Naive thymus-derived CD4-positive, alpha-beta T cell (primary cell): ENCODE measurements at regions of chr1 and their contacts with region 1.

Region 1: DNA sequence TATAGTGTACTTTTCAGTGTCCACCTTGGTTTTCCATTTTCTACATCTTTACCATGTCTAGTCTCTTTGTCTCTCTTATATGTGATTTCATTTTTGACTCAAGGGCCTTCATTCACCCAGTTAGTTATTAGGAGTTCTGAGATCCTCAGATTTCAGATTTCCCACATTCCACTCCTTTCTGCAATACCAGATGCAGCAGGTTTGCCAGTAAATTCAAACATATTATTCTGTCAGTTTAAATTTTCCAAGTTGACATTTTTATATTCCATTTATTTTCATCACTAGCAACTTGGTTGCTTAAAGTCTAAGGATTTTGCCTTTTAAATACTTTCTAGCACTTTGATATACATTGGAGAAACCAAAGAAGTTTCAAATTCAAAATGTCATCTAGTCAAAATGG is 42.4 kb downstream of the ABL2 start:
- DNase-seq: no peak
- ATAC-seq: no peak
- H3K4me3 ChIP-seq: no peak overlapping the region
- H3K4me3 Mint-ChIP-seq: no peak overlapping the region
- H3K27ac ChIP-seq: no peak overlapping the region
- H3K27ac Mint-ChIP-seq: no peak overlapping the region
- H3K4me1 ChIP-seq: no peaks in the 10 kb centered on the region
- H3K4me1 Mint-ChIP-seq: peaks cover 5 to 29% (median 19%) of the 10 kb centered on the region in 7 donors
- H3K27me3 ChIP-seq: no peaks in the 10 kb centered on the region
- H3K27me3 Mint-ChIP-seq: no peaks in the 10 kb centered on the region

Region 2: DNA sequence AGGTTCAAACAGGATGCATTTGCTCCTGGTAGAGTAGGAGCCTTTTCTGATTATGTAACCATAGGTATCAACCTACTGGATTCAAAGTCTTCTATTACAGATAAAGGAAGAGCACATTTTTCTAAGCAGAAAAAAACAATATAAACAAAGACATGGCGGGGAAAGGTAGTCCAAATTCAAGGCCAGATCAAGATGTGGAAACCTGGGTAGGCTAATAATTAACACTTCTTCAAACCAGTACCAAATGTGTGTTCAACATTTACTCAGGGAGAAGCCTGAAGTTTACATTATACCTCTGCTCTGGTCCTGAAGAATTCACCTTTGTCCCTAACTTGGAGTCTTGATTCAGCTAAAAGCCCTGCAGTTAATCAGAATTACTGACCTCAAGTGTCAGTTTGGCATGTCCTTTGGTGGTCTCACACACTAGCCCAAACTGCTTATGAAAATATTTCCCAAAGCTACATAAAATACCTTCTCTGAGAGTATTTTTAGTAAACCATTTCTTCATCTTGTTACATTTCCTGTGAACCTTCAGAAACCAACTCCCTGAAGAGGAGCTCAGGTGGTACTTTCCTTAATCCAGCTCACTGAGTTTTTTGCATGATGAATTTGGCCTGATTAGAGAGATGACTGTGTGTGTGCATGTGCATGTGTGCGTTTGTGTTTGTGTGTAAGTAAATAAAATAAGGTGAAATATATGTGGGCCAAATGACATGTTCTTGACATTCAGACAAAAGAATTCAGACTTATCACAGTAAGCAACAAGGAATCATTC is 34.9 kb before region 1 on chr1:
- CTCF ChIA-PET with region 1: no interaction called
- POLR2A ChIA-PET with region 1: no interaction called
- intact Hi-C with region 1: loop called in 1 of 2 experiments (anchors 5 kb)
- DNase-seq: no peak
- ATAC-seq: no peak
- H3K4me3 ChIP-seq: no peak overlapping the region
- H3K4me3 Mint-ChIP-seq: peak overlapping the region in 3 of 10 donors; percentile 0 to 56 (median 12)
- H3K27ac ChIP-seq: no peak overlapping the region
- H3K27ac Mint-ChIP-seq: peak overlapping the region in 8 of 9 donors; percentile 27 to 82 (median 56)
- H3K4me1 ChIP-seq: no peaks in the 10 kb centered on the region
- H3K4me1 Mint-ChIP-seq: peaks cover 8 to 44% (median 28%) of the 10 kb centered on the region in 7 donors
- H3K27me3 ChIP-seq: no peaks in the 10 kb centered on the region
- H3K27me3 Mint-ChIP-seq: no peaks in the 10 kb centered on the region